H1 (cell line): ENCODE measurements at regions of chr15 and their contacts with region 1.

Region 1: DNA sequence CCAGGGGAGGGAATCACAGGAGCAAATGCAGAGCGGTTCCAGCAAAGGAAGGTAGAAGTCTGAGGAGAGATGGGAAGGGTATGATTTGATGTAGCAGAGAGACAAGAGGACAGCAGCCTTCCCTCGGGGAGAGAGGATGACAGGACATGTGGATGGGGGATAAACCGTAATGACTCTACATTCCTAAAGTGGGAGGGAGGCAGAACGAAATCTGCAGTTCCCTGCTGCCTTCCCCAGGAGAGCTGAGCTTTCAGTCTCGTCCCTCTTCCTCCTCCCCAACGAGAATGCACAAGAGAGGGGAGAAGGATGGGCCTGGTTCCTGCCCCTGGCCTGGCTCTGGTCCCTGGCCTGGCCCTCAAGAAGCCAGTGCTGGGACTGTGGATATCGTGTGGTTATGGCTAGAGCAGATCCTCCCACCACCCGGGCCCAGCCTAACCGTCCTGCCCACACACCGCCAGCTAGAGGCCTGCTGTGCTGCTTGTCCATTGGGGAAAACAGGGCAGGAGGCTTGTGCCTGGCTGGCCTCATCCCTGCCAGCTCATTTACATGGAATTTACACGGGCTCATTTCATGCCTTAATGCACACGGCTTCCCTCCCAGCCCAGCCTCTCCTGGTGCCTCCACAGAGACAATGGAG is 26.6 kb downstream of the SEMA7A start:
- DNase-seq: no peak
- H3K4me3 ChIP-seq: no peak overlapping the region
- H3K27ac ChIP-seq: no peak overlapping the region
- H3K4me1 ChIP-seq: peaks cover 0 to 10% (median 3%) of the 10 kb centered on the region in 4 experiments; a peak in 5 of 7 replicates
- H3K27me3 ChIP-seq: no peaks in the 10 kb centered on the region; a peak in 2 of 7 replicates
- CTCF ChIP-seq: no peak
- EP300 ChIP-seq: no peak
- POLR2A ChIP-seq: no peak
- RAD21 ChIP-seq: no peak

Region 2: GRCh38 chr15:74373731-74374647 is 33.2 kb before region 1 on chr15:
- CTCF ChIA-PET with region 1: interaction called, 12 read pairs
- POLR2A ChIA-PET with region 1: no interaction called
- DNase-seq: peak; percentile 79 to 97
- H3K4me3 ChIP-seq: peak overlapping the region; percentile 37 to 74 (median 62)
- H3K27ac ChIP-seq: no peak overlapping the region
- H3K4me1 ChIP-seq: peaks cover 4 to 15% (median 9%) of the 10 kb centered on the region in 4 experiments
- H3K27me3 ChIP-seq: peaks cover 0 to 3% (median 0%) of the 10 kb centered on the region in 4 experiments; a peak in 3 of 7 replicates
- CTCF ChIP-seq: peak; percentile 85 to 93 (median 90)
- EP300 ChIP-seq: no peak
- POLR2A ChIP-seq: peak in 1 of 2 experiments; percentile 44; a peak in 1 of 3 replicates
- RAD21 ChIP-seq: peak; percentile 92 to 94

Region 3: DNA sequence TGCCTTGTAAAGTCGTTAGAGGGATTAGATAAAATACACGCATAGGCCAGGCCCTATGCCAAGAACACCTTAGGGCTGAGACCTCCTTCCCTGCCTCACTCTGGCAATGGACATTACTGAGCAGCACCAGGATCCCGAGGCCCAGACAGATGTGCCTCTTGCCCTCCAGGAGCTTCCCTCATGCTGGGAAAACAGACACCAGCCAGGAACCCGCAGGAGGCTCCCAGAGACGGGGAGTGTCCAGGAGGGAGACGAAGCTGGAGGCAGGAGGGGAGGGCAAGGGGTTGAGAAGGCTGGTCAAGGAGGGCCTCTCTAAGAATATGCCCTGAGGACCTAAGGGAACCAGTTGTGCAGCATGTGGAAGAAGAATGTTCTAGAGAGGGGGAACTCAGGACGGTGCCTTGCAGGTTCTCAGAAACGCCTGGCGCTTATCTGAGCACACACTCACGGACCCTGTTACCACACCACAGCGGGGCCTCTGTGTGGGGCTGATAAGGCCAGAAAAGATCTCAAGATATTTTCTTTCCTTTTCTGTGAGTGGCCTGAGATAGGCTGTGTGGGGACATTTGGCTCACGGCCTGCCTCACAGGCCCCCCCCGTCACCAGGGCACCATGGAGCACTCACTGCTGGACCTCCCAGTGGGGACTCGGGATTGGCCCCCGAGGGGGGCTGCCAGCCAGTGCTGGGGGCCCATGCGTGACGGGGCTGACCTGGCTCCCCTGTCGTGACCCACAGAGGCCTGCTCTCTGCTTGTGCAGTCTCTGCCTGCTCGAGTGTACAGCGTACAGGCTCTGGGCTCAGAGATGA is 17.7 kb before region 1 on chr15:
- CTCF ChIA-PET with region 1: interaction called, 19 read pairs
- POLR2A ChIA-PET with region 1: interaction called, 3 read pairs
- DNase-seq: no peak
- H3K4me3 ChIP-seq: no peak overlapping the region
- H3K27ac ChIP-seq: no peak overlapping the region
- H3K4me1 ChIP-seq: peaks cover 0 to 18% (median 9%) of the 10 kb centered on the region in 4 experiments; a peak in 5 of 7 replicates
- H3K27me3 ChIP-seq: no peaks in the 10 kb centered on the region
- CTCF ChIP-seq: no peak
- EP300 ChIP-seq: no peak
- POLR2A ChIP-seq: no peak
- RAD21 ChIP-seq: no peak

Region 4: DNA sequence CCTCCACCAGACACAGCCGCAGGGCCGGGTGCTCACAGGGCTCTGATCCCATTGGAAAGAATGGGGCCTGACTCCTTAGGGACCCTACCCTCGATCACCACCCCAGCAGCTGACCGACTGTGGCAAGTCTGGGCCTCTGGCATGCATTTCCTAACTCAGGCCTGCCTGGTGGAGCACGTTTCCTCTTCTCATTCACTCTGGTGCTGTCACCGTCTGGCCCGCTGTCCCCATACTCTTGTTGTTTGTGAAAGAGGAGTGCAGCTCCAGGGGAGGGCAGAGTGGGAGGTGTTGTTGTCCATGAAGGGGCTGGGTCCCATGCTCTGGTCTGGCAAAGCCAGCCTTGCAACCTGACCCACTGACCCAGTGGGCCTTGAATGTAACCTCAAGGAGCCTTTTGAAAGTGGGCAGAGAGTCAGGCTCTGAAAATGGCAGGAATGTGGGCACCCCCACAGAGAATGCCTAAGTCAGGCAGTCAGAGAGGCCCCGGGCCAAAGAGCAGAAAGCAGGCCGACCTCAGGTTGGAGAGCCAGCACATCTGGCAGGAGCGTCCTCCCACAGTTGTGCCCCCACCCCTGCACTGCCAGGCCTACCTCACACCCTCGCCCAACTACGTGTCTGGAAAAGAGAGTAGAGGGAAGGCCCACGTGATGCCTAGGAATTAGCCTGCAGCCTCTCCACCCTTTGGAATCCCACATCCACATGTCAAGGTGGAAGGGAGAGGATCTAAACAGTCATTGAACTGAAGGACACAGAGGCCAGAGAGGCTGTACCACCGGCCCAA is 15.7 kb after region 1 on chr15:
- CTCF ChIA-PET with region 1: interaction called, 14 read pairs
- POLR2A ChIA-PET with region 1: interaction called, 8 read pairs
- DNase-seq: peak in 1 of 2 experiments; percentile 70
- H3K4me3 ChIP-seq: no peak overlapping the region
- H3K27ac ChIP-seq: no peak overlapping the region
- H3K4me1 ChIP-seq: peaks cover 7 to 27% (median 20%) of the 10 kb centered on the region in 4 experiments
- H3K27me3 ChIP-seq: no peaks in the 10 kb centered on the region
- CTCF ChIP-seq: no peak
- EP300 ChIP-seq: no peak
- POLR2A ChIP-seq: no peak
- RAD21 ChIP-seq: no peak

Region 5: DNA sequence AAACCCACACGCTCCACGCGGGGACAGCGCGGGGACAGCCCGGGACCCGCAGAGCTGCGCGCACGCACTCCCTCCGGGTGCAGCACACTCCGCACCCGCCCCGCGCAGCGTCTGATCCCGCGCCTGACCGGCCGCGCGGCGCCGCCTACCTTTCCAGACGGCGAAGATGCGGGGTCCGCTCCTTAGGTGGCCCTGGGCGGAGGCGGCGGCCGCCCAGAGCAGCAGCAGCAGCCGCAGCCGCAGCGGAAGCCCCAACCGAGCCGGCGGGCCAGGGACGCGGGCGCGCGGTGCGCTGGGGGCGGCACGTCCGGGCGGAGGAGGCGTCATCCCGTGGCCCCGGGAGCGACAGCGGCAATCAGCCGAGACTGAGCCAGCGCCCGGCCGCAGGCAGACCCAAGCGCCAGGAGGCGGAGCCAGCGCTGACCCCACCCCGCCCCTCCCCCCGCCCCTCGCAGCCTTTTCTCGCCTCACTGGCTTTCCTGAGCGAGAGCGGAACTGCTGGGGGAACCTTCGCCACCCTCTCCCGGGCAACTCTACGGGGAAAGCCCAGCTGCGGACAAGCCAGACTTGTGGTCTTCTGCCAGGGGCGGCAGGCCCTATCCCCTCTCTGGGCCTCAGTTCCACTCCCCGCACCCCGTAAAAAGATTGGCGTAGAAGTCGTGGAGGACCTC is 26.6 kb after region 1 on chr15 and contains the start of gene SEMA7A:
- CTCF ChIA-PET with region 1: interaction called, 48 read pairs
- POLR2A ChIA-PET with region 1: interaction called, 3 read pairs
- DNase-seq: peak; percentile 58 to 89
- H3K4me3 ChIP-seq: peak within 1 kb of the TSS; percentile 70 to 89 (median 76)
- H3K27ac ChIP-seq: no peak within 1 kb of the TSS; the same call in 1 of the 2 replicates
- H3K4me1 ChIP-seq: peaks cover 0 to 12% (median 7%) of the 10 kb centered on the region in 4 experiments; a peak in 6 of 7 replicates
- H3K27me3 ChIP-seq: peaks cover 0 to 14% (median 10%) of the 10 kb centered on the region in 4 experiments; a peak in 5 of 7 replicates
- CTCF ChIP-seq: no peak
- EP300 ChIP-seq: no peak
- POLR2A ChIP-seq: peak in 1 of 2 experiments; percentile 72; a peak in 2 of 3 replicates
- RAD21 ChIP-seq: no peak
- total RNA-seq, gene SEMA7A: 14.6 and 15.0 TPM in 2 replicates

Region 6: DNA sequence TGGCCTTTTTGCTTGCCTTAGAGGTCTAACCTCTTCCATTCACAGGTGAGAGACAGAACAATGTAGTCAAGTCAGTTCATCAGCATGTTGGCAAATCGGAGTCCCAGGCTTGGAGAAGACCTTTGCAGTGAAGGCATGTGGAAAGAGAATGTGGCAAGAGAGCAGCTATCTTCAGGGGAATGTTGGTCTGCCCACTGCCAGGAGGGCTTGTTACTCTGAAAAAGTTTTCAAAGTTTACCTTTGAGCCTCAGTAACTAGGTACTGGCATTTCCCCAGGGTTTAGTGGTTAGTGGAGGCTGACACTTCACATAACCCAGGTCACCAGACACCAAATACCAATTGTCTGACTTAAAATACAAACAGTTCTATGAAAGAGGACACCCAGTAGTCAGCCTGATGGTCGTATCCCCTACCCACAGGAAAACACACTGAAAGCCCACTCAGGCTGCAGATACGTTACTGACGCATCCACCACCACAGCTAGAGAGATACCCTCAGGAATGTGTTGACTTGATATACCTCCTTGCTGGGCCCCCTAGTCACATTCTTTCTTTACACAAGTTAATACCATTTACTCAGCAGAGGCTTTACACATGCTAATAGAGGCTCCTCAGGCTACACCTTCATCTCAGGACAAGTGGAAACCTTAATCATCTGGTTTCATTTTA is 124.1 kb after region 1 on chr15:
- CTCF ChIA-PET with region 1: no interaction called
- POLR2A ChIA-PET with region 1: no interaction called
- DNase-seq: peak in 1 of 2 experiments; percentile 55
- H3K4me3 ChIP-seq: peak overlapping the region in 2 of 4 experiments; percentile 5 to 40; a peak in 2 of 8 replicates
- H3K27ac ChIP-seq: peak overlapping the region; percentile 84
- H3K4me1 ChIP-seq: peaks cover 6 to 18% (median 11%) of the 10 kb centered on the region in 4 experiments
- H3K27me3 ChIP-seq: no peaks in the 10 kb centered on the region
- CTCF ChIP-seq: no peak
- EP300 ChIP-seq: peak in 1 of 2 experiments; percentile 83; a peak in 1 of 3 replicates
- POLR2A ChIP-seq: peak in 1 of 2 experiments; percentile 90; a peak in 2 of 3 replicates
- RAD21 ChIP-seq: no peak

Region 7: DNA sequence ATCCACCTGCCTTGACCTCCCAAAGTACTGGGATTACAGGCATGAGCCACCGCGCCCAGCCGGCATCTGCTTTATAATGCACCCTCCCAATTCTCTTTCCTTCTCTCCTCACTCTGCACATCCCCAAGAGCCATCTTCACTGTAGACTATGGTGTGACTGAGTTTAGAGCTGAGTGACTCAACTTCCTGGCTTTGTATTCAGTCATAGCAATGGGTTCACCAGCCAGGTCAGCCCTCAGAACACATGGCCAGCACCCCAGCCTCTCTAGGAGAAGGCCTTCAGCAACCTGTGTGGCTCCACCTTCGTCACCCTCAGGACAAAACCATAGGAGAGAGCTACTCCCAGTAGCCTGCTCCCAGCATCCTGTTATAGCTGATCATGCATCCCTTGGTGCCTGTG is 166.8 kb after region 1 on chr15:
- CTCF ChIA-PET with region 1: no interaction called
- POLR2A ChIA-PET with region 1: no interaction called
- DNase-seq: no peak
- H3K4me3 ChIP-seq: no peak overlapping the region
- H3K27ac ChIP-seq: no peak overlapping the region
- H3K4me1 ChIP-seq: no peaks in the 10 kb centered on the region
- H3K27me3 ChIP-seq: no peaks in the 10 kb centered on the region
- CTCF ChIP-seq: no peak
- EP300 ChIP-seq: no peak
- POLR2A ChIP-seq: no peak
- RAD21 ChIP-seq: no peak